Posterior cingulate gyrus (tissue), 11 donors: ENCODE measurements at regions of chr18 and their contacts with region 1.

Region 1: DNA sequence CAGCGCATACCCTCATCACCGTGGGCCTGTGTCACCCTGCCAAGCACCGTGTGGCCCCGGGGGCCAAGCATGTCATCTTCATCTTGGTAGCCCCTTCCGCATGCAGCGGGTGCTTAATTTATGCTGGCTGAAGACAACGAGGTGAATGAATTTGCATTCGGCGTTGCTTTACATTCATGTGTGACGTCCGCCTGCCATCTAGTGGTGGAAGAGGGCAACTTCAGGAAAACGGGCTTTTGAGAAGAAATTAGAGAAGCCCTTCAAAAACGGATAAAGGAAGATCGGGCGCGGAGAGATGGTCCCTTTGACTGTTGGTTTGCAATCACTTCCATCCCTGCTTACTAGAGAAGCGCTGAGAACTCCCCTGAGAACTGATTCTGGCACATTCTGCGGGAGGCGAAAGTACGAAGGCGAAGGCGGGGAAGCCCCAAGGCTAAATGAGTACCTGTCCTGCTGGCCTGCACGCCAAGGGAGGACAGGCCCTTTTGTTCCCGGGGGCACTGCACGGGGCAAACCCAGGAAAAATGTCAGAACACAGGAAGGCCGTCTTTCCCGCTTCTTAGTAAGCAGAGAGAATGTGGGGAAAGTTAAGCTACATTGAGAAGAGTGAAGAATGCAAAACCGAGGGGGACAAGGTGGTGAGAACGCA is 145.9 kb downstream of the ZNF516 start:
- DNase-seq: peak in 8 of 10 donors; percentile 42 to 92 (median 72)

Region 2: DNA sequence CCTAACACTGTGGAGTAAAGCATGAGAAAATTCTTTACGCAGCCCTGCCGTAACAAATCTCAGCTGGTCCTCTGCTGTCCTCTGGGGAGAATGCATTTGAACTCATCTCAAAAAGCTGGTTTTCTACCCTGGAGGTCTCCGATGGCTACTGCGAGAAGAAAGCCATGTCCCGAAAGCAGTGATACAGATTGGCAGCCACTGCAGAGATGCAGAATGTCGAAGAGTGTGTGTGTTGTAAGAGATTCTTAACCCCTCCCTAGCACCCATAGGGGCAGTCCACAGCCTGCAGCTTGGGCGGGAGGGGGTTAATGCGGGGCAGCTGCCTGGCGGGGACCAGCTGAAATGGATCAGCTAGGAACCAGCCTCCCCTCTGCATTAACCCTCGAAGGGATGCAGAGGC is 90.1 kb before region 1 on chr18:
- intact Hi-C with region 1: loop called (anchors 5 kb)
- DNase-seq: no peak